Heart right ventricle (tissue), 16 donors: ENCODE measurements at regions of chr15 and their contacts with region 1.

Region 1: DNA sequence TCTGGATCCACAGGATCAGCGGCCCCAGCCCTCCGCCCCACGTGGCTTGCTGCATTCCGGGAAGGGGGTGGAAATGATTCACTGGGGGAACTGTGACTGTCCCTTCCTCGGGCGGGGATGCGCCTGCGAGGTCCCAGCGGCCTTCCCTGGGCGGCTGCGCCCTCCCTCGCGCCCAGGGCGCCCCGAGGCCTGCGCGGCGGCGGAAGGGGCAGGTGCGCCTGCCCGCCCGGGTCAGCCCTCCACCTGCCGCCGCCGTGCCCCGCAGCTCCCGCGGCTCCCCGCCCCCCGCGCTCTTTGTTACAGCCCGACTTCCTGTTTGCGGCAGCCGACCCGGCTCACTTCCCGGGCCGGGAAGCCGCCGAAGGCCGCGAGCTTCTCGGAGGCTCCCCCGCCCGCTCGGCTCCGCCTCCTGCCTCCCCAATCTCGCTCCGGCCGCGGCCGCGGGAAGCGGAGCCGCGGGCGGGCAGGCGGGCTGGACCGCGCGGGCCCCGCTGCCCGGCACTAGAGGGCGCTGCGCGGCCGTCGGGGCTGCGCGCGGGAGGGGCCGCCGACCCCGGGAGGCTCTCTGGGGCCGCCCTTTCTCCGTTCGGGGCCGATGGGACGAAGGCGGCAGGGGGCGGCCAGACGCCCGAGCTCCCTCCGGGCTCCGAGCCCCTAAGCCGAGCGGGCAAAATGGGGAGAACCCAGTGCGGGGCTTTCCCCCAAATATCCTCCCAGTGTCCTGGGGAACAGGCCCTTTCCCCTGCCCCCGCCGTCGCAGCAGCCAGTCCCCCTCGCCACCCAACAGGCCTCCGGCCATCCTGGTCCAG is 11.5 kb upstream of the CHAC1 start:
- DNase-seq: peak; percentile 84
- ATAC-seq: peak; percentile 64 to 87 (median 76)
- H3K4me3 ChIP-seq: peak overlapping the region in 9 of 10 donors; percentile 46 to 96 (median 63)
- H3K27ac ChIP-seq: peak overlapping the region; percentile 86 to 96 (median 93)
- H3K4me1 ChIP-seq: peaks cover 14 to 63% (median 55%) of the 10 kb centered on the region in 9 donors
- H3K27me3 ChIP-seq: no peaks in the 10 kb centered on the region
- CTCF ChIP-seq: peak; percentile 47 to 91 (median 69)

Region 2: DNA sequence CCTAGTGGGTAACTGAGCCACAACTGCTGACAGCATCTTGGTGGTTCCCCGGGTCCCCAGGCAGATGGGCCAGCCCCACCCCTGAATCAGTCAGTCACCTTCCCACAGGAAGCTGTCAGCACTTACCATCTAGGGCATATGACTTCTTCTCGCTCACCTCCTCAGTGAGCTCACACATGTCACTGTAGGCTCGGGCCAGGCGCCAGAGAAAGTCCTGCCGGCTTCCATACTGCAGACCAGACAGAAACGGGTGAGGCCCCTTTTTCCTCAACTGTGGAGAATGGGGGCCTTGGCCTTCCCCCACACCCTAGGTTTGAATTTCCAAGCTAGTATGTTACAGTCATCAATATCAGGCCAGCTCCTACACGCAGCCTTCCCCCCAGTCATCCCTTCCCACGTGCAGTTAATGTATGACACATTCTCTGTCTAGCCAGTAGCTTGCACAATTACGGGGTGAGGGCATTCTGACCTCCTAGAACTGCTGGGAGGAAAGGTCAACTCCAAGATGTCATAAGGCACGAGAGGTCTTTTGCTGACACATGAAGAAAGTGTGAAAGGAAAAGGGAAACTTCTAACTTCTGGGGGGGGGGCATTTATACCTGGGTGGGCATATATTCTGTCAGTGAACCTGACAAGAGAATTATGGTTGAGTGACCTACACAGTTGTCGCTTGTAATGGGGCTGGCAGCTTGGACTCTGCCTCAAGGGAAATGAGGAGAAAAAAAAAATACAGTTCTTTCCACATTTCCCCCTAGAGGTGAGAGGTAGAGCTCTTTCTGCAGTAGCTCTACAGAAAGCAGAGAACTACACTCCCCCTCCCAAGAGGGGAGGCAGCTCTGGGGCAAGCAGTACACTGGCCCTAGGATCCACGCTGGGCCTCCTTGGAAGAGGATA is 197.6 kb before region 1 on chr15:
- intact Hi-C with region 1: no loop called
- DNase-seq: no peak
- ATAC-seq: peak in 7 of 8 donors; percentile 34 to 76 (median 65)
- H3K4me3 ChIP-seq: no peak overlapping the region
- H3K27ac ChIP-seq: peak overlapping the region in 1 of 10 donors; percentile 68
- H3K4me1 ChIP-seq: peaks cover 0 to 45% (median 0%) of the 10 kb centered on the region in 9 donors
- H3K27me3 ChIP-seq: no peaks in the 10 kb centered on the region
- CTCF ChIP-seq: no peak

Region 3: GRCh38 chr15:40918146-40918798 is 23.5 kb before region 1 on chr15:
- intact Hi-C with region 1: no loop called
- DNase-seq: no peak
- ATAC-seq: peak; percentile 10 to 67 (median 28)
- H3K4me3 ChIP-seq: peak overlapping the region in 9 of 10 donors; percentile 3 to 48 (median 39)
- H3K27ac ChIP-seq: peak overlapping the region; percentile 44 to 90 (median 78)
- H3K4me1 ChIP-seq: peaks cover 2 to 51% (median 12%) of the 10 kb centered on the region in 9 donors
- H3K27me3 ChIP-seq: no peaks in the 10 kb centered on the region
- CTCF ChIP-seq: no peak

Region 4: DNA sequence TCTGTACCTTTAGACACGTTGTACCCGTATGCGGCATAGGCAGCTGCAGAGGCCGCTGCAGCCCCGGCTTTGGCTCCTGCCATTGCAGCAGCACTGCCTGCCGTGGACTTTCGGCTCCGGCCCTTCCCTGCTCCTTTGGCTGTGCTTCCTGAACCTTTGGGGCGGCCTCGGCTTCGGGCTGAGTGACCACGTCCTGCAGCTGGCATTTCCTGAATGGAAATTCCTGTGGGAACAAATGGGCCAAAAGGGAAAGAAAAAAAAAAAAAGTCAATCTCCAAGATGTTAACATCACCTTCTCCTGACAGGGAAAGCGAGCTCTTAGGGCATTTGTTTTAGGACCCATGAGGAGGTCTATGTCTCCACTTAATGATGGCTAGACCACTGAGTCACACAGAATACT is 41.1 kb after region 1 on chr15:
- intact Hi-C with region 1: loop called in 1 of 10 experiments (anchors 5 kb)
- DNase-seq: peak in 1 of 2 donors; percentile 32
- ATAC-seq: peak in 3 of 8 donors; percentile 41 to 60 (median 50)
- H3K4me3 ChIP-seq: no peak overlapping the region
- H3K27ac ChIP-seq: peak overlapping the region in 3 of 10 donors; percentile 13 to 34 (median 16)
- H3K4me1 ChIP-seq: peaks cover 0 to 16% (median 0%) of the 10 kb centered on the region in 9 donors
- H3K27me3 ChIP-seq: no peaks in the 10 kb centered on the region
- CTCF ChIP-seq: no peak

Region 5: DNA sequence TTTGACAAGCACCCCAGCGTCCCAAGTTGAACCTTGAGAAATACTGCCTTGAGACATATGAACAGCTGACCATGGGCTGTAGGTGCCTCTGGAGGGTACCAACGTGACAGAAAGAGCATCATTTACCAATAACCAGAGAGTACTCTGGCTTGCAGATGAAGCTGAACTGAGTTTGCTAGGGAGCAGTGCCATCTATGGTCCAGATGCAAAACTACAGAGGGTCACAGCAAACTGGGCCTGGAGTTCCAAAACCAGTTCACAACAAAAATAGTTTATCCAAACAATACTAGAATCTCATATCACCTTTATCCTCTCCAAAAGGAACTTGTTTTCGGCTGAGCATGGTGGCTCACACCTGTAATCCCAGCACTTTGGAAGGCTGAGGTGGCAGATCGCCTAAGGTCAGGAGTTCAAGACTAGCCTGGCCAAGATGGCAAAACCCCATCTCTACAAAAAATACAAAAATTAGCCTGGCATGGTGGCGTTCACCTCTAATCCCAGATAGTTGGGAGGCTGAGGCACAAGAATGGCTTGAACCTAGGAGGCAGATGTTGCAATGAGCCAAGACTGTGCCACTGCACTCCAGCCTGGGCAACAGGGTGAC is 80.9 kb after region 1 on chr15:
- intact Hi-C with region 1: loop called in 8 of 10 experiments (anchors 2 to 10 kb)
- DNase-seq: peak in 1 of 2 donors; percentile 38
- ATAC-seq: peak; percentile 45 to 71 (median 54)
- H3K4me3 ChIP-seq: no peak overlapping the region
- H3K27ac ChIP-seq: no peak overlapping the region
- H3K4me1 ChIP-seq: peaks cover 2 to 61% (median 34%) of the 10 kb centered on the region in 9 donors
- H3K27me3 ChIP-seq: no peaks in the 10 kb centered on the region
- CTCF ChIP-seq: peak; percentile 45 to 85 (median 77)

Region 6: DNA sequence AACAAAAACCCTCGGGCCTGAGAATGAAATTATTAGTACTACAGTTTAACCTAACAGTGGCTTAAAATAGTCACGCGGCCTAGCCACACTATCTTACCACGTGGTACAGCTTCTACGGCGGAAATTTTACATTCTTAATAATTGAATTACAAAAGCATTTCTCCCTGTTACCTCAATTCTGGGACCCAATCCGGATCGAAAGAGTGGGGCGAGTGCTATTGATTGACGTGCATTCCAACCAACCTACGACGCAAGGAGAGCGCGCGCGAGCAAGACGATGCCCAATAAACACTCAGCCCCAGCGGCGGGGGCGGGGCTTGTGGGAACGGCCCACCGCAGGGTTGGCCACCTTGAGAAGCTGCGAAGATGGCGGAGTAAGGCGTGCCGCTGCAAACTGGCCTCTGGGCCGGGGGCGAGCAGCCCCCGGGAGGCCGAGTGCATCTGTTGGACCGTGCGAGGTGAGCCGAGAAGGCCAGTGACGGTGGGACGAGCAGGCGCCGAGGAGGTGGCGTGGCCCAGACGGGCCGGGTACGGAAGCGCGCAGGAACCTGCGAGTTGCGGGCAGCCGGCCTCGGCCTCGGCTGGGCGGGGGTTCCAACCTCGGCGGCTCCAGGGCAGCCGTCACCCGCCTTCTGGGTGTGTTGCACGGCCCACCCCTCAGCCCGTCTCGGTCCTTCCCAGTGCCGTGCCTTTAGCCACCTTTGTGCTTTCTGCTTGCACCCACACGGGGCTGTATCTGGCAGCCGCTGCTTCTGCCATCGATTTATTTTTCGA is 342.1 kb after region 1 on chr15:
- intact Hi-C with region 1: no loop called
- DNase-seq: peak; percentile 96 to 99
- ATAC-seq: peak; percentile 98 to 100 (median 100)
- H3K4me3 ChIP-seq: peak overlapping the region; percentile 66 to 96 (median 82)
- H3K27ac ChIP-seq: peak overlapping the region; percentile 86 to 99 (median 94)
- H3K4me1 ChIP-seq: peaks cover 0 to 48% (median 33%) of the 10 kb centered on the region in 9 donors
- H3K27me3 ChIP-seq: no peaks in the 10 kb centered on the region
- CTCF ChIP-seq: no peak